ENCODE measurements at regions of chr5 and their contacts with region 1.

Region 1: GRCh38 chr5:65481635-65482295 is at the start of gene ADAMTS6:
- DNase-seq: peak; percentile 94
- H3K4me3 Mint-ChIP-seq: no peak within 1 kb of the TSS
- H3K27ac Mint-ChIP-seq: peak within 1 kb of the TSS; percentile 92
- H3K4me1 Mint-ChIP-seq: peaks cover 8% of the 10 kb centered on the region
- H3K27me3 Mint-ChIP-seq: no peaks in the 10 kb centered on the region
- CTCF ChIP-seq: no peak
- total RNA-seq, gene ADAMTS6: 17.8 and 19.5 TPM in 2 replicates

Region 2: DNA sequence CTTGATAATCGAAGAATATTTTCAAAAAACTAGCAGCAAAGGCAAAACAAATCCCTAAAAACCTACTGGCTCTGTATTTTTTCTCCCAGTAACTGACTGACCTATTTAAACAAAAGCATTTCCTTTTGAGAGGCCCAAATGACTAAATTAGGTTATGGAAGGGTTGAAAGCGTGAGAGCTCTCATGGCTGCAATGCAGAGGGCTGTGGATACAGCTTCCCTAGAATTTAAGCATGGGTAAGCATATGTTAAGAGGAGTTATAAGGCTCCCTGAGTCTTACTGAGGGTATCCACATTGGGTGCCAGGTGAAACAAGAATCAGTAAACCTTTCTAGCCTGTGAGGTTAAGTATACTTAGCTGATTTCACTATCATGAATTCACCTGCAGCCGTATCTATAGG is 759.2 kb before region 1 on chr5:
- CTCF ChIA-PET with region 1: no interaction called
- POLR2A ChIA-PET with region 1: no interaction called
- intact Hi-C with region 1: no loop called
- DNase-seq: no peak
- H3K4me3 Mint-ChIP-seq: no peak overlapping the region
- H3K27ac Mint-ChIP-seq: no peak overlapping the region
- H3K4me1 Mint-ChIP-seq: no peaks in the 10 kb centered on the region
- H3K27me3 Mint-ChIP-seq: no peaks in the 10 kb centered on the region
- CTCF ChIP-seq: no peak

Region 3: GRCh38 chr5:64811050-64811640 is 670.6 kb before region 1 on chr5:
- CTCF ChIA-PET with region 1: interaction called, 143 read pairs
- POLR2A ChIA-PET with region 1: interaction called, 26 read pairs
- intact Hi-C with region 1: loop called (anchors 1 kb)
- DNase-seq: peak; percentile 45
- H3K4me3 Mint-ChIP-seq: no peak overlapping the region
- H3K27ac Mint-ChIP-seq: no peak overlapping the region
- H3K4me1 Mint-ChIP-seq: peaks cover 8% of the 10 kb centered on the region
- H3K27me3 Mint-ChIP-seq: no peaks in the 10 kb centered on the region
- CTCF ChIP-seq: peak; percentile 71

Region 4: GRCh38 chr5:64965613-64966012 is 516.2 kb before region 1 on chr5:
- CTCF ChIA-PET with region 1: interaction called, 41 read pairs
- POLR2A ChIA-PET with region 1: interaction called, 21 read pairs
- intact Hi-C with region 1: no loop called
- DNase-seq: no peak
- H3K4me3 Mint-ChIP-seq: no peak overlapping the region
- H3K27ac Mint-ChIP-seq: no peak overlapping the region
- H3K4me1 Mint-ChIP-seq: no peaks in the 10 kb centered on the region
- H3K27me3 Mint-ChIP-seq: no peaks in the 10 kb centered on the region
- CTCF ChIP-seq: no peak

Region 5: GRCh38 chr5:65076251-65076869 is 405.4 kb before region 1 on chr5:
- CTCF ChIA-PET with region 1: no interaction called
- POLR2A ChIA-PET with region 1: no interaction called
- intact Hi-C with region 1: loop called (anchors 5 kb)
- DNase-seq: peak; percentile 72
- H3K4me3 Mint-ChIP-seq: no peak overlapping the region
- H3K27ac Mint-ChIP-seq: no peak overlapping the region
- H3K4me1 Mint-ChIP-seq: no peaks in the 10 kb centered on the region
- H3K27me3 Mint-ChIP-seq: no peaks in the 10 kb centered on the region
- CTCF ChIP-seq: no peak

Region 6: GRCh38 chr5:65209341-65209740 is 272.4 kb before region 1 on chr5:
- CTCF ChIA-PET with region 1: no interaction called
- POLR2A ChIA-PET with region 1: no interaction called
- intact Hi-C with region 1: loop called (anchors 5 kb)
- DNase-seq: peak; percentile 45
- H3K4me3 Mint-ChIP-seq: no peak overlapping the region
- H3K27ac Mint-ChIP-seq: peak overlapping the region; percentile 77
- H3K4me1 Mint-ChIP-seq: peaks cover 20% of the 10 kb centered on the region
- H3K27me3 Mint-ChIP-seq: no peaks in the 10 kb centered on the region
- CTCF ChIP-seq: no peak

Region 7: GRCh38 chr5:65268525-65268924 is 213.2 kb before region 1 on chr5:
- CTCF ChIA-PET with region 1: no interaction called
- POLR2A ChIA-PET with region 1: no interaction called
- intact Hi-C with region 1: no loop called
- DNase-seq: no peak
- H3K4me3 Mint-ChIP-seq: no peak overlapping the region
- H3K27ac Mint-ChIP-seq: no peak overlapping the region
- H3K4me1 Mint-ChIP-seq: no peaks in the 10 kb centered on the region
- H3K27me3 Mint-ChIP-seq: no peaks in the 10 kb centered on the region
- CTCF ChIP-seq: no peak